ENCODE measurements at regions of chr6 and their contacts with region 1.

Region 1: GRCh38 chr6:44257025-44257752 is at the start of gene SLC35B2:
- DNase-seq: peak; percentile 59 to 79
- H3K4me3 ChIP-seq: peak within 1 kb of the TSS; percentile 78
- H3K27ac ChIP-seq: peak within 1 kb of the TSS; percentile 36
- H3K4me1 ChIP-seq: peaks cover 16% of the 10 kb centered on the region; the same call in 1 of the 2 replicates
- H3K27me3 ChIP-seq: no peaks in the 10 kb centered on the region
- CTCF ChIP-seq: no peak
- total RNA-seq, gene SLC35B2: 57.6 and 59.7 TPM in 2 replicates

Region 2: GRCh38 chr6:44127186-44128019 is 129.8 kb before region 1 on chr6 and contains the starts of genes MRPL14 and TMEM63B:
- CTCF ChIA-PET with region 1: interaction called, 4 read pairs
- POLR2A ChIA-PET with region 1: interaction called, 15 read pairs
- intact Hi-C with region 1: no loop called
- DNase-seq: peak; percentile 46 to 88
- H3K4me3 ChIP-seq: peak within 1 kb of the TSS; percentile 94
- H3K27ac ChIP-seq: peak within 1 kb of the TSS; percentile 54
- H3K4me1 ChIP-seq: peaks cover 44% of the 10 kb centered on the region
- H3K27me3 ChIP-seq: no peaks in the 10 kb centered on the region
- CTCF ChIP-seq: no peak
- total RNA-seq, gene MRPL14: 96.3 and 97.9 TPM in 2 replicates
- total RNA-seq, gene TMEM63B: 36.1 and 38.5 TPM in 2 replicates

Region 3: DNA sequence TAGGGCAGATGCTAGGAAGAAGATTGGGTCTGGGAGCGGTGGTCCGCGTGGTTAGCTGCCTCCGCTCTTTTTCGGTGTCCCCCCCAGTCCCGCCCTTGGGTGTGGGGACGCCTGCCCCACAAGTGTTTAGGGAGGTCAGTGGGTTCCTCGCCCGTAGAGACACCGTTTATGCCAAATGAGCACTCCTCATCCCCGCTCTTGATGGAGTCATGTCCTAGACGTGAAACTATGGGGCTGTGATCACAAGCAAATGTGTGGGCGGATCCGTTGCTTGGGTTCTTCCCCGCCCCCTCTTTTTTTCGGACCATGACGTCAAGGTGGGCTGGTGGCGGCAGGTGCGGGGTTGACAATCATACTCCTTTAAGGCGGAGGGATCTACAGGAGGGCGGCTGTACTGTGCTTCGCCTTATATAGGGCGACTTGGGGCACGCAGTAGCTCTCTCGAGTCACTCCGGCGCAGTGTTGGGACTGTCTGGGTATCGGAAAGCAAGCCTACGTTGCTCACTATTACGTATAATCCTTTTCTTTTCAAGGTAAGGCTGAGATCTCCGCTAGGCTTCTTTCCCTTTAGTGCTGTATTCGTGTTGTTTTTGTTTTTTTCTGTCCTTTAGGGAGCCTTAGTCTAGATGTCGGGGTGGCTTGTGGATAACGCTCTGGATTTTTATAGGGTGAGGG is 10.4 kb before region 1 on chr6 and contains the start of gene HSP90AB1:
- CTCF ChIA-PET with region 1: no interaction called
- POLR2A ChIA-PET with region 1: interaction called, 17 read pairs
- intact Hi-C with region 1: no loop called
- DNase-seq: peak; percentile 94 to 97
- H3K4me3 ChIP-seq: peak within 1 kb of the TSS; percentile 98
- H3K27ac ChIP-seq: peak within 1 kb of the TSS; percentile 94
- H3K4me1 ChIP-seq: peaks cover 35% of the 10 kb centered on the region
- H3K27me3 ChIP-seq: no peaks in the 10 kb centered on the region
- CTCF ChIP-seq: no peak
- total RNA-seq, gene HSP90AB1: 895 and 1,136 TPM in 2 replicates